BJ (cell line): ENCODE measurements at regions of chr20 and their contacts with region 1.

Region 1: DNA sequence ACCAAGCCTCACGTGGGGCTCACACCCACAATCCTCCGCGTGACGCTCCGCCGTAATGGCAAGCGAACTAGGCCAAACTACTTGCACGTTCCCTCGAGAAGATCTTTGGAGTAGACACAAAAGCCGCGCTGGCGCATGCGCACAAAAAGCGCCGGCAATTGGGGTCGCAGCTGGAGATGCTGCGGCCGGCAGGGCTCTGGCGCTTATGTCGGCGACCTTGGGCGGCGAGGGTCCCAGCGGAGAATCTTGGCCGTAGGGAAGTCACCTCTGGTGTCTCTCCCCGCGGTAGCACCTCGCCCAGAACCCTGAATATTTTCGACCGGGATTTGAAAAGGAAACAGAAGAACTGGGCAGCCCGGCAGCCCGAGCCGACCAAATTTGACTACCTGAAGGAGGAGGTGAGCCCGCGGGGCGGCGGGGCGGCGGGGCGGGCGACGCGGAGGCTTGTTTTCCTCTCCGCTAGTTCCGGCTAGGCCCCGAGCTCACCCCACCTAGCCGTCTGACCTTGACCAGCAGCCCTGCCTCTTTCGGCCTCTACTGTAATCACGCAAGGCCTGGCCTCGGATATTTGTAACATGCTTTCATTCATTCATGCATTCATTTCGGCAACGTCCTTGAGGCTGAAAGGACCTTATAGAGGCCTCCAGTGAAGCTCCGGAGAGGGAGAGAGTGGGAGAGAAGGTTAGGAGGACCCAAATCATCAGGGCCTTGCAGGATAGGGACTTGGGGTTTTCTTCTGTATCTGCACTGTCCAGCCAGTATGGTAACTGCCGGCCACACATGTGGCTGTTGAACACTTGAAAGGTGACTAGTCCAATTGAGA is at the starts of genes ESF1 and NDUFAF5:
- DNase-seq: peak; percentile 85
- H3K4me3 ChIP-seq: peak within 1 kb of the TSS; percentile 85
- H3K27me3 ChIP-seq: no peaks in the 10 kb centered on the region
- CTCF ChIP-seq: no peak
- polyA plus RNA-seq, gene ESF1: 0.76 and 2.8 TPM in 2 replicates
- polyA plus RNA-seq, gene NDUFAF5: 6.3 and 16.1 TPM in 2 replicates

Region 2: GRCh38 chr20:13771853-13772453 is 13.2 kb before region 1 on chr20:
- CTCF ChIA-PET with region 1: interaction called, 12 read pairs
- POLR2A ChIA-PET with region 1: no interaction called
- DNase-seq: no peak
- H3K4me3 ChIP-seq: no peak overlapping the region
- H3K27me3 ChIP-seq: no peaks in the 10 kb centered on the region
- CTCF ChIP-seq: peak; percentile 42

Region 3: DNA sequence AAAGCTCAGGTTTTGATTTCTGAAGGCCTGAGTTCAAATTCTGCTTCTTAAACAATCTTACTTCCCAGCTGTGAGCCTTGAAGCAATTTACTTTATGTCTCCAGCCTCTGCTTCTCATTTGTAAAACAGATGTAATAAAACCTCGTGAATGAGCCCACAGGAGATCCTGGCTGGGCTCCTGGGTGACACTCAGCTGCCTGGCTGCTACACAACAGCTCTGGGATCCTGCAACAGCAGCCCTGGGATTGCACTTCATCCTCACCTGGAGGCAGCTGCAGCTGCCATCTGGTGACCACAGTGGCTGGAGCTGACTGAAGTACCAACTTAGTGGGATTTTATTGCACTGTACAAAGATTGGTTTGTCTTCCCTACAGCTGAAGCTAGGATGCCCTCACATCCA is 98.3 kb after region 1 on chr20:
- CTCF ChIA-PET with region 1: no interaction called
- POLR2A ChIA-PET with region 1: no interaction called
- DNase-seq: no peak
- H3K4me3 ChIP-seq: no peak overlapping the region
- H3K27me3 ChIP-seq: no peaks in the 10 kb centered on the region
- CTCF ChIP-seq: no peak